CD4-positive, alpha-beta T cell (primary cell): ENCODE measurements at regions of chr11 and their contacts with region 1.

Region 1: DNA sequence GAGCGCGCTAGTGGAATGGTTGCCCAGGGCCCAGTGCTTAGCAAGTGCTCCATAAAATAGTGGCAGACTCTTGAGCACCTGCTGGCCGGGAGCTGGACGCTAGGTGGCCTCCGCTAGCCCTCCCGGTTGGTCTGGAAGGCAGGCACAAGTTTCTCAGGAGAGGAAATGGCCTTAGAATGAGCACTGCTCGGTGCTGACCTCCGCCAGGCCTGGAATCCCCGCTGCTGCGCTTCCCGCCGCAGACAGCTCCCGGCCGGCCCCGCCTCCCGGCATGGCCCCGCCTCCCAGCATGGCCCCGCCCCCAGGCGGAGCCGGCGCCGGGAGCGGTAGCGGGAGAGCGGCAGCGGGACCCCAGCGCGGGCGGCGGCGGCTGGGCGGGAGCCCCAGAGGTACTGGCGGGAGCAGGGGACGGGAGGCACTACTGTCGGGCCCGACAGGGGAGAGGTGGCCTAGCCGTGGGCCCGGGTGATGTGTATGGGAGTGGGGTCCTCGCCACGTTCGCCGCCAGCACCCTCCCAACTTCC is at the start of gene SIPA1:
- DNase-seq: peak; percentile 50 to 90 (median 68)
- ATAC-seq: peak; percentile 43
- H3K4me3 ChIP-seq: peak within 1 kb of the TSS; percentile 100
- H3K4me3 Mint-ChIP-seq: peak within 1 kb of the TSS; percentile 97
- H3K27ac ChIP-seq: peak within 1 kb of the TSS; percentile 92 to 95
- H3K27ac Mint-ChIP-seq: peak within 1 kb of the TSS; percentile 100
- H3K4me1 ChIP-seq: peaks cover 74% of the 10 kb centered on the region
- H3K4me1 Mint-ChIP-seq: peaks cover 60% of the 10 kb centered on the region
- H3K27me3 ChIP-seq: no peaks in the 10 kb centered on the region
- H3K27me3 Mint-ChIP-seq: no peaks in the 10 kb centered on the region
- CTCF ChIP-seq: no peak
- total RNA-seq, gene SIPA1: 272 to 298 TPM

Region 2: GRCh38 chr11:65662799-65663638 is 25.2 kb after region 1 on chr11 and contains the start of gene RELA:
- CTCF ChIA-PET with region 1: no interaction called
- POLR2A ChIA-PET with region 1: interaction called, 244 read pairs
- intact Hi-C with region 1: loop called in 1 of 2 experiments (anchors 1 kb)
- DNase-seq: peak; percentile 79 to 96 (median 89)
- ATAC-seq: peak; percentile 83
- H3K4me3 ChIP-seq: peak within 1 kb of the TSS; percentile 97
- H3K4me3 Mint-ChIP-seq: peak within 1 kb of the TSS; percentile 92
- H3K27ac ChIP-seq: peak within 1 kb of the TSS; percentile 96 to 97
- H3K27ac Mint-ChIP-seq: peak within 1 kb of the TSS; percentile 94
- H3K4me1 ChIP-seq: peaks cover 59% of the 10 kb centered on the region
- H3K4me1 Mint-ChIP-seq: peaks cover 33% of the 10 kb centered on the region
- H3K27me3 ChIP-seq: no peaks in the 10 kb centered on the region
- H3K27me3 Mint-ChIP-seq: no peaks in the 10 kb centered on the region
- CTCF ChIP-seq: no peak
- total RNA-seq, gene RELA: 379 to 382 TPM